IMR-90 (cell line): ENCODE measurements at regions of chr6 and their contacts with region 1.

Region 1: GRCh38 chr6:17484201-17484849 is 90.9 kb downstream of the CAP2 start:
- DNase-seq: no peak
- ATAC-seq: no peak
- H3K4me3 ChIP-seq: no peak overlapping the region
- H3K27ac ChIP-seq: no peak overlapping the region
- H3K4me1 ChIP-seq: no peaks in the 10 kb centered on the region
- H3K27me3 ChIP-seq: no peaks in the 10 kb centered on the region
- CTCF ChIP-seq: no peak
- POLR2A ChIP-seq: no peak
- RAD21 ChIP-seq: no peak

Region 2: DNA sequence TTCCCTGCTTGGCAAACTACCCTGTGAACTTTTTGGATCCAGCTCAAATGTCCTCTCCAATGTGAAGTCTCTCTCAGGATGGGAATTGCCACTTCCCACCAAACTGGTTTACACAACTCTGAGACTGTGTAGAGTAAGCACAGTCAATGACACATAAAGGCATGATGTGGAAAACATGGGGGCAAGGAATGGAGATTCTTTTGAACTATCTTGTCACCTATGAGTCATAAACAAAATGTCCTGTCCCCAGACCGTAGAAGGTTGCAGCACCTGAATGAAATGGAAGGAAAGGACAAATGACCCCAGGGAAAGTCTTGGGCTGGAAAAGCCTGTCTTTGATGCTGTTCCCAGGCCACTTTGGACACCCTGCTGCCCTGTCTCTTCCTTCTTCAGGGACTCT is 514.1 kb after region 1 on chr6:
- CTCF ChIA-PET with region 1: no interaction called
- POLR2A ChIA-PET with region 1: no interaction called
- dilution Hi-C with region 1: no loop called
- in situ Hi-C with region 1: no loop called
- intact Hi-C with region 1: no loop called
- DNase-seq: peak; percentile 46
- ATAC-seq: no peak
- H3K4me3 ChIP-seq: no peak overlapping the region
- H3K27ac ChIP-seq: no peak overlapping the region
- H3K4me1 ChIP-seq: peaks cover 5% of the 10 kb centered on the region
- H3K27me3 ChIP-seq: no peaks in the 10 kb centered on the region
- CTCF ChIP-seq: no peak
- POLR2A ChIP-seq: no peak
- RAD21 ChIP-seq: no peak

Region 3: DNA sequence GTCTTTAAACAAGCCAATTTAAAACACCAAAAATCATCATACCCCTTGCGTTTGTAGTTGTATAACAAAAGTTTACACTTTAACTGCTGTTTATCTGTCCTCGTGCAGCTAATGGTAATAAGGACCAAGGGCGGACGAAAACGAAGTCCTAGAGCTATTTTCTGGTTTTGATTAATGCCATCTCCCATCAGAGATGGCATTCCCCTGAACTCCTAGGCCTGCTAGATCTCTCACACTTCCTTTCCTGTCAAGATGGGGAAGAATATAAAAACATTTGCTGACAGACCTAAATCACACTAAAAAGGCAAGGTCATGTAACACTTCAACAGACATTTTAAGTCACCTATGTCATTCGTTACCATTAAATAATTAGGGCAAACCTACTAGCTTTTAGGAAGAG is 770.5 kb after region 1 on chr6:
- CTCF ChIA-PET with region 1: interaction called, 10 read pairs
- POLR2A ChIA-PET with region 1: no interaction called
- dilution Hi-C with region 1: no loop called
- in situ Hi-C with region 1: no loop called
- intact Hi-C with region 1: no loop called
- DNase-seq: no peak
- ATAC-seq: no peak
- H3K4me3 ChIP-seq: no peak overlapping the region
- H3K27ac ChIP-seq: no peak overlapping the region
- H3K4me1 ChIP-seq: peaks cover under 1% of the 10 kb centered on the region; the same call in 1 of the 2 replicates
- H3K27me3 ChIP-seq: no peaks in the 10 kb centered on the region
- CTCF ChIP-seq: no peak
- POLR2A ChIP-seq: no peak
- RAD21 ChIP-seq: no peak